Breast epithelium (tissue), 4 donors: ENCODE measurements at regions of chr20 and their contacts with region 1.

Region 1: DNA sequence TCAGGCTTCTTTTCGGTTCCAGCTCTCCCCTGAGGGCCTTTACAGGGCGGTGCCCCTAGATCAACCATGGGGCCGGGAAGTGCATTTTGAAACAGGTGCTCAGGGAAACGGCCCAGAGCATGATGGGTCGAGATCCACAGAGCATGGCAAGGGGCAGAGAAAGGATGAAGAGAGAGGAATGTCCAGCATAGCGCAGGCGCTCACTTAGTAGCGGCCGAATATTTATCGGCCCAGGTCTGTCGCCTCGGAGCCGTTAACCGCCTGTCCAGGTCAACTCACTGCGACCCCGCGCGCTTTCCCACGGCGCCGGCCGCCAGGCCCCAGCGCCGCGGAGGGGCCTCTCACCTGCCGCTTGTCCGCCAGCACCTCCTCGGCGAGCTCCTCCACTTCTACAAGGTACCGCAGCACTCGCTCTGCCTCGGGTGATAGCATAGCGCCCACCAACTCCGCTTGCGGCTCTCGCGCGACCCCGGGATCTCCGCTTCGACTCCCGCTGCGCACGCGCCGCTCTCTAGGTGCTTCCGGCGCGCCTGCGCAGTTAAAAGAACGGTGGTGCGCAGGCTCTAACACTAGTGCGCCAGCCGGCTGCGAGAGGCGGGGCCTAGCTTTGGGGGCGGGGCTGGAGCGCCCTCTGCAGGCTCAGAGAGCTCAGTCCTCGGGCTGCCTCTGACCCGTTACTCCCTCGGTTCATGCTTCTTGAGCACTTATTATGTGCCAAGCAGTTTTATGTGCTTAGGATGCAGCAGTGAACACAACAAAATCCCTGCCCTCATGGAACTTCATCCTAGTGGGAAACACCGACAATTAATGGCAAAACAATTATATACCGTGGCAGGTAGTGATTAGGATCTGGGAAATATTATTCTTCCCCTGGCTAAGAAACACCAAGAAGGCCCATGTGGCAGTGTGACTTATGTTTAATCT is at the start of gene PDRG1:
- DNase-seq: peak; percentile 89 to 96
- H3K4me3 ChIP-seq: peak within 1 kb of the TSS; percentile 73 to 94 (median 86)
- H3K27ac ChIP-seq: peak within 1 kb of the TSS; percentile 82 to 84
- H3K4me1 ChIP-seq: peaks cover 5 to 12% of the 10 kb centered on the region in 2 donors
- H3K27me3 ChIP-seq: peaks cover 0 to 9% of the 10 kb centered on the region in 2 donors
- CTCF ChIP-seq: peak; percentile 37 to 91 (median 80)
- POLR2A ChIP-seq: no peak
- total RNA-seq, gene PDRG1: 5.1 to 11.1 (median 9.8) TPM

Region 2: GRCh38 chr20:31822421-31823330 is 129.1 kb before region 1 on chr20:
- intact Hi-C with region 1: loop called (anchors 10 kb)
- DNase-seq: peak; percentile 50 to 80
- H3K4me3 ChIP-seq: peak overlapping the region in 2 of 3 donors; percentile 15 to 40
- H3K27ac ChIP-seq: no peak overlapping the region
- H3K4me1 ChIP-seq: no peaks in the 10 kb centered on the region
- H3K27me3 ChIP-seq: no peaks in the 10 kb centered on the region
- CTCF ChIP-seq: peak; percentile 93 to 98 (median 97)
- POLR2A ChIP-seq: no peak

Region 3: DNA sequence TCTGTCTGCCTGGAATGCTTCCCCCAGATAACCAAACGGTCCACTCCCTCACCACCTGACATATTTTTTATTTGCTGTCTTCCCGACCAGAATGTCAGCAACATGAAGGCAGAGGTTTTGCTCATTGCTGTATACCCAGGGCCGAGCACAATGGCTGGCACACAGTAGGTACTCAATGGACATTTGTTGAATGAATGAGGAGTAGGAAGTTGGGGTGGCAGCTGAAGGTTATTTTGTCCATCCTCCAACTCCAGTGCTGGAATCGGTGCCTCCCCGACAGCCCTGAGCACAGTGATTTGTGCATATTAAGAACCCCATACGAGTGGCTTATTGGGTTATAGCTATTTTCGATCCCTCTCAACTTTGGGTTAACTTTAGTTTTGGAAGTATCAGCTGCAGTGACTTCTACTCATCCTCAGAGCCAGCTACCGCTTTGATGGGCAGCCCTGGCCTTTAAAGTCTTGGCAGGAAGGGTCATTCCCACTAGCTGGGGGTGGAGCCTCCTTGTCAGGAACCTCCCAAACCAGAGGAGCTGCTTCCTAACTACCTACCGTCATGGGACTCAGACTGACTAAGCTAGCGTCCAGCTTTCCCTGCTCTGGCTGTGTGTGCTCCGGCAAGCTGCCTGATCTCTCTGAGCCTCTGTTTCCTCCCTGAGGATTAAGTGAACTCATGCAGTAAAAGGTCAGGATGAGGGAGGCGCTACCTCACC is 91.6 kb before region 1 on chr20:
- intact Hi-C with region 1: loop called (anchors 10 kb)
- DNase-seq: peak in 1 of 2 donors; percentile 51
- H3K4me3 ChIP-seq: peak overlapping the region in 2 of 3 donors; percentile 61 to 78
- H3K27ac ChIP-seq: no peak overlapping the region
- H3K4me1 ChIP-seq: no peaks in the 10 kb centered on the region
- H3K27me3 ChIP-seq: peaks cover 0 to 8% of the 10 kb centered on the region in 2 donors
- CTCF ChIP-seq: no peak
- POLR2A ChIP-seq: no peak

Region 4: DNA sequence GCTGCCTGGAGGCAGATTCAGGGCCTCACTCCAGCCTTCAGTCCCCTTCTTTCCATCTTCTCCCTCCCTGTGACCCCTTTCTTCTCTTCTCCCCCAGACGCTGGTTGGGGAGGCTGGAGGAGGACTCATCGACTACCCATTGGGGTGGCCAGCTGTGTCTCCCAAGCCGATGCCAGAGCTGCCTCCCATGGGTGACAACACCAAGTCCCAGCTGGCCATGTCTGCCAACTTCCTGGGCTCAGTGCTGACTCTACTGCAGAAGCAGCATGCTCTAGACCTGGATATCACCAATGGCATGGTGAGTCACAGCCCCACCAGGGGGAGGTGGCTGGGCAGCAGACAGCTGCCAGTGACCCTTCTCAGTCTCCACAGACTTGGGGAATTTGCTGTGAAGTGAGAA is 1140.6 kb after region 1 on chr20:
- intact Hi-C with region 1: no loop called
- DNase-seq: no peak
- H3K4me3 ChIP-seq: no peak overlapping the region
- H3K27ac ChIP-seq: no peak overlapping the region
- H3K4me1 ChIP-seq: no peaks in the 10 kb centered on the region
- H3K27me3 ChIP-seq: no peaks in the 10 kb centered on the region
- CTCF ChIP-seq: no peak
- POLR2A ChIP-seq: no peak